ENCODE measurements at regions of chr2 and their contacts with region 1.

Region 1: GRCh38 chr2:16525265-16525887 is 140.3 kb downstream of the CYRIA start:
- DNase-seq: peak in 1 of 2 experiments; percentile 89
- H3K4me3 ChIP-seq: no peak overlapping the region
- H3K27ac ChIP-seq: no peak overlapping the region
- H3K4me1 ChIP-seq: peaks cover 0 to 4% (median 0%) of the 10 kb centered on the region in 4 experiments; a peak in 2 of 7 replicates
- H3K27me3 ChIP-seq: no peaks in the 10 kb centered on the region
- CTCF ChIP-seq: peak; percentile 73 to 87 (median 86)
- EP300 ChIP-seq: no peak
- POLR2A ChIP-seq: no peak
- RAD21 ChIP-seq: peak; percentile 89 to 91

Region 2: DNA sequence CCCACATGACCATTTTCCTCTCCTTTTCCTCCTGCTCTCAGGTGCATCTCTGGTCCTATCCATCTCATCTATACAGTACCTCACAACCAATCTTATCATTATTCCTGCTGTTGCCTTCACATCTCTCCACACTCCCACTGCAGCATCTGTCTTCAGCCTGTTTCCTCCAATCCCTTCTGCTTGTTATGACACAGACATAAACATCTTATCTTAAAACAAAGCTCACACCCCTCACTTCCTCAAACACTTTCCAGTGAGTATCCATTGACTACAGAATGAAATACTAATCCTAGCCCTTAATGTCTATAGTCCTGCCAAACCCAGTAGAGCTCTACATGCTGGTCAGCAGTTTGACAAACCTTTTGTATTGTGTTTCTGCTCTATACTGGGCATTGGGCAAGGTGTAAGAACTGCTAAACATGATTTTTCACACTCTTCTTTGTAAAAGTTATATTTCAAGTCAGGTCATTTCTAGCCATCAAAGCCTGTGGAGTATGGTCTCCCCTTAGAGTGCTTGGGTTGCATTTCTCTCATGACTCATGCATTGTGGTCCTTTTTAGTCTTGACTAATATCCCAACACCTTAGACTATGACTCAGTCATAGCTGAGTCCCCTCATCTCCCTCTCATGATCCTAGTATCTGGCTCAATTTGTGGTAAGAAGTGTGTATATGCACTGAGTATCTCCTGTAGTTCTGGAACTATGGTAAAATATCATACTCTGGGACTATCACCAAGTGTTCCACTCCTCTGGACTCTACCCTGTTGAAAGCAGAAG is 46.8 kb before region 1 on chr2:
- CTCF ChIA-PET with region 1: no interaction called
- POLR2A ChIA-PET with region 1: no interaction called
- DNase-seq: no peak
- H3K4me3 ChIP-seq: no peak overlapping the region
- H3K27ac ChIP-seq: no peak overlapping the region
- H3K4me1 ChIP-seq: no peaks in the 10 kb centered on the region
- H3K27me3 ChIP-seq: no peaks in the 10 kb centered on the region
- CTCF ChIP-seq: no peak
- EP300 ChIP-seq: no peak
- POLR2A ChIP-seq: no peak
- RAD21 ChIP-seq: no peak

Region 3: DNA sequence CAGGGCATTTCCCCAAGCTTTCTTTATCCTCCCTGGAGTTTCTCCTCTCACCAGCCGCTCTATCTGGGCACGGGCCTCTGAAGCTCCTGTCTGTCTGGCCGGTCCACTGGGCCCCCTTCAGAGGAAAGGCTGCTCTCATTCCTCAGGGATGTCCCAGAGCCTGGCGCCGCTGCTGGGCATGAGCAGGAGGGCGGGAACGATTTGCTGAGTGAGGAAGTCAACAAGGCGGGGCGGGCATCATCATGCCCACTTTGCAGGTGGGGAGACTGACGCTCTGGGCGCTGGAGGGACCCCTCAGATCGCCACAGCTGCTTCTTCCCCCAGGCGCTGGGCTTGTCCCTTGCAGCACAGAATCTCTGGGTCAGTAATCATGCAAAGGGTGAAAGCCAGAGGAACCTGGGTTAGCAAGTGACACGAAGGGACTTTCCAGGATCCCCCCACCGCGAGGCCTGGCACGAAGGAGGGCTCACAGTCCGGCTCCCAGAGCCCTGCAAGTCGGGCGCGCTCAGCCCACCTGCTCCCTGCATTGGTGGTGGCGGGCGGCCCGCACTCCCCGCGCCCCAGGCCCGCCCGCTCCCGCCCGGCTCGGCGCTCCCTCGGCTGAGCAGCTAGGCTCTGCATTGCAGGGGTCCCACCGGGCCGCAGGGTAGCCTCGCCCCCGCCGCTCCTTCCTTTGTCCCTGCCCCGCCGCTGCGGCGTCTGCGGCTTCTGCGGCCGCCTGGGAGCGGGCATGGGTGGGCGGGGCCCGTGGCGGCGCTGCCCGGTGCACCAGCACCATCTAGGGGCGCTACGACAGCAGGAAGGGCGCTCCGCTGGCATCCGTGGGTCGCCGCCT is 17.5 kb before region 1 on chr2:
- CTCF ChIA-PET with region 1: interaction called, 26 read pairs
- POLR2A ChIA-PET with region 1: no interaction called
- DNase-seq: peak; percentile 27 to 82
- H3K4me3 ChIP-seq: peak overlapping the region; percentile 36 to 61 (median 39)
- H3K27ac ChIP-seq: no peak overlapping the region
- H3K4me1 ChIP-seq: peaks cover 0 to 7% (median 6%) of the 10 kb centered on the region in 4 experiments; a peak in 4 of 7 replicates
- H3K27me3 ChIP-seq: peaks cover 0 to 4% (median 0%) of the 10 kb centered on the region in 4 experiments; a peak in 2 of 7 replicates
- CTCF ChIP-seq: peak; percentile 77 to 82 (median 82)
- EP300 ChIP-seq: peak in 1 of 2 experiments; percentile 48; a peak in 1 of 3 replicates
- POLR2A ChIP-seq: no peak
- RAD21 ChIP-seq: peak; percentile 93 to 95

Region 4: GRCh38 chr2:16513626-16514025 is 11.8 kb before region 1 on chr2:
- CTCF ChIA-PET with region 1: interaction called, 26 read pairs
- POLR2A ChIA-PET with region 1: no interaction called
- DNase-seq: no peak
- H3K4me3 ChIP-seq: no peak overlapping the region
- H3K27ac ChIP-seq: no peak overlapping the region
- H3K4me1 ChIP-seq: peaks cover 0 to 2% (median under 1%) of the 10 kb centered on the region in 4 experiments; a peak in 3 of 7 replicates
- H3K27me3 ChIP-seq: peaks cover 0 to 3% (median 0%) of the 10 kb centered on the region in 4 experiments; a peak in 1 of 7 replicates
- CTCF ChIP-seq: no peak
- EP300 ChIP-seq: no peak
- POLR2A ChIP-seq: no peak
- RAD21 ChIP-seq: no peak

Region 5: GRCh38 chr2:16537347-16537746 is 12.0 kb after region 1 on chr2:
- CTCF ChIA-PET with region 1: interaction called, 20 read pairs
- POLR2A ChIA-PET with region 1: no interaction called
- DNase-seq: no peak
- H3K4me3 ChIP-seq: no peak overlapping the region
- H3K27ac ChIP-seq: no peak overlapping the region
- H3K4me1 ChIP-seq: no peaks in the 10 kb centered on the region
- H3K27me3 ChIP-seq: no peaks in the 10 kb centered on the region
- CTCF ChIP-seq: no peak
- EP300 ChIP-seq: no peak
- POLR2A ChIP-seq: no peak
- RAD21 ChIP-seq: no peak

Region 6: DNA sequence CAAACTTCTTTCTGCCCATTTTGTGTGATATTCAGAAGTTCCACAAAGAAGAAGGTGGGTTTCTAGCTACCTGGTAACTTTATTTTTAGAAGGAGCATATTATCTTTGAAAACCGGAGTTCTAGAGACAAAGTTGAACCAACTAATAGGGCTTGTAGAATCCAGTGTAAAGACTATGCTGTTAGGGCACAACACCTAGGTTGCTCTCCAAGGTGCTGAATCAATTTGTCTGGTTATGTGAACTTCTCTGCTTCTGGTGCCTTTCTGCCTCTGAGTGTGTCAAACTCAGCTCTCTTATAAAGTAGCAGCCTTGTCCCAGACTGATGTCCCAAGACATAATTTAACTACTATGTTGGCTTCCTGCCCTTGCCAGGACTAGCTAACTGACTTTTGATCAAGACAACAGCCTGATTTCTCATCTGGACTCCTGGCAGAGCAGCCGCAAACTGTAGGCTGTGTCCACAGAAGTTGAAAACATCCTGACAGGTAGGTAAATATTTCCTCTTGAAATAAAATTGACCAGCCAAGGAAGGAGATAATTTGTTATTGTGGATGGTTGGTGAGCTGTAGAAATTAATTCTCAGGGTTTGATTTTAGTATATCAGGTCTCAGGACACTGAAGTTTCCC is 20.9 kb after region 1 on chr2:
- CTCF ChIA-PET with region 1: interaction called, 26 read pairs
- POLR2A ChIA-PET with region 1: no interaction called
- DNase-seq: no peak
- H3K4me3 ChIP-seq: no peak overlapping the region
- H3K27ac ChIP-seq: no peak overlapping the region
- H3K4me1 ChIP-seq: no peaks in the 10 kb centered on the region
- H3K27me3 ChIP-seq: no peaks in the 10 kb centered on the region
- CTCF ChIP-seq: no peak
- EP300 ChIP-seq: no peak
- POLR2A ChIP-seq: no peak
- RAD21 ChIP-seq: no peak

Region 7: GRCh38 chr2:16553226-16553625 is 27.9 kb after region 1 on chr2:
- CTCF ChIA-PET with region 1: interaction called, 30 read pairs
- POLR2A ChIA-PET with region 1: no interaction called
- DNase-seq: peak in 1 of 2 experiments; percentile 51
- H3K4me3 ChIP-seq: no peak overlapping the region
- H3K27ac ChIP-seq: no peak overlapping the region
- H3K4me1 ChIP-seq: peaks cover 0 to 3% (median 0%) of the 10 kb centered on the region in 4 experiments; a peak in 1 of 7 replicates
- H3K27me3 ChIP-seq: no peaks in the 10 kb centered on the region
- CTCF ChIP-seq: peak; percentile 33 to 73 (median 67)
- EP300 ChIP-seq: no peak
- POLR2A ChIP-seq: no peak
- RAD21 ChIP-seq: peak; percentile 61 to 77

Region 8: GRCh38 chr2:16561676-16562075 is 36.3 kb after region 1 on chr2:
- CTCF ChIA-PET with region 1: interaction called, 14 read pairs
- POLR2A ChIA-PET with region 1: no interaction called
- DNase-seq: no peak
- H3K4me3 ChIP-seq: no peak overlapping the region
- H3K27ac ChIP-seq: no peak overlapping the region
- H3K4me1 ChIP-seq: peaks cover 0 to 3% (median 0%) of the 10 kb centered on the region in 4 experiments; a peak in 1 of 7 replicates
- H3K27me3 ChIP-seq: no peaks in the 10 kb centered on the region
- CTCF ChIP-seq: no peak
- EP300 ChIP-seq: no peak
- POLR2A ChIP-seq: no peak
- RAD21 ChIP-seq: no peak

Measured in H1 (cell line).